ENCODE measurements at regions of chr6 and their contacts with region 1.

Region 1: DNA sequence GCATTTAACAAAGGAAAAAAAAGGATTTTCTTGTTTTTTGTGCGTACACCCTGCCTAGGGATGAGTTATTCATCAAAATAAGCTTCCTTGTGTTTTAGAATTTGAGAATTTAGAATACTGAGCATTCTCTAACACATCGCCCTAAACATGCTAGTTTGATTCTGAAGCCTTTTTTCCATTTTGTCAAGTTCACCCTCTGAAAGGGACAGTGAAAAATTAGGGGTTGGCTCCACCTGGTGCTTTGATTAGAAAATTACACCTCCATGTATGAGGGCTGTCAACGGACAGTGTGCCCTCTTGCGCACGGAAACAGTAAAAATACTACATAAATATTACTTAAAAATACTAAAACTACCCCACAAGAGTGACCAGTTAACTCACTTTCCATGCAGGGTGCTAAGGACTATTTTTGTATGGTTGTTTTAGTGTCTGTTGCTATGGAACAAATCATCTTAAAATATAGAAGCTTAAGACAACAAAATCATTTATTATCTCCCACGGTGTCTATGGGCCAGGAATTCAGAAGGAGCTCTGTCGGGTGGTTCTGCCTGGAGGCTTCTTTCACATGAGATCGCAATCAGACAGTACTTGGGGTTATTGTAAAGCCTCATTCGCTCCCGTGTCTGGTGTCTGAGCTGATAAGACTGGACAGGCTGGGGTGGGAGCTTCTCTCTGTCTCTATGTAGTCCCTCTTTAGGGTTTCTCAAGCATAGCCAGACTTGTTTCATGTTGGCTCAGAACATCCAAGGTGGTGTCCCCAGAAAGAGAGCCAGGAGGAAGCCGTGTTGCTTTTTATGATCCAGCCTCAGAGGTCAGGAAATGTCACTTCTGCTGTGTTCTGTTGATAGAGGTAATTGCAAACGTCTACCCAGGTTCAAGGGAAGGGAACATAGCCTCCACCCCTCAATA is 41.1 kb upstream of the TMEM170B start:
- DNase-seq: peak; percentile 84 to 88
- H3K4me3 ChIP-seq: no peak overlapping the region
- H3K4me1 ChIP-seq: peaks cover 14% of the 10 kb centered on the region
- H3K27me3 ChIP-seq: no peaks in the 10 kb centered on the region

Region 2: GRCh38 chr6:10954590-10955010 is 541.8 kb before region 1 on chr6:
- in situ Hi-C with region 1: loop called (anchors 10 kb)
- DNase-seq: peak; percentile 59 to 93
- H3K4me3 ChIP-seq: no peak overlapping the region
- H3K4me1 ChIP-seq: no peaks in the 10 kb centered on the region
- H3K27me3 ChIP-seq: no peaks in the 10 kb centered on the region

Region 3: DNA sequence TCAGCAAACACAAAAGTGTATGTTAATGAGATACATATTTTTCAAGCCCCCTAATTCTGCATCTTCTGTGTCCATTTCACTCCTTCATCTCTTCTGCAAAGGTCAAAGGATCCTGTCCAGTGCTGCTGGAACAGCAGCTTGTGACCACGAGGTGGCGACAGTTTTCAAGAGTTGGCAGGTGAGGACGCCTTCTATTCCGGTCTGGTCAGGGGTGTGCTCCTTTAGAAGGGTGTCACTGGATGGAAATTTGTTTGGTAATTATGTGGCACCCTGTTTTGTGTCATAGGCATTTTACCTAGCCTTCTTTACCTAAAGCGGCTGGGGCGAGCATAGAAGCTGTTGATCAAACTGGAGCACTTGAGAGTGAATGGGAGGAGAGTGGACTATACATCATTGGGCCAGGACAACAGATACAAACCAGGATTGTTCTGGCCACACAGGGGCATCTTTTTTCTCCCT is 352.0 kb before region 1 on chr6:
- in situ Hi-C with region 1: loop called (anchors 5 kb)
- DNase-seq: peak; percentile 69 to 90
- H3K4me3 ChIP-seq: no peak overlapping the region
- H3K4me1 ChIP-seq: peaks cover 11% of the 10 kb centered on the region
- H3K27me3 ChIP-seq: no peaks in the 10 kb centered on the region

Region 4: GRCh38 chr6:11232193-11232769 is 264.1 kb before region 1 on chr6 and contains the start of gene NEDD9:
- in situ Hi-C with region 1: loop called (anchors 10 kb)
- DNase-seq: peak; percentile 98 to 99
- H3K4me3 ChIP-seq: peak within 1 kb of the TSS; percentile 74
- H3K4me1 ChIP-seq: peaks cover 32% of the 10 kb centered on the region
- H3K27me3 ChIP-seq: no peaks in the 10 kb centered on the region

Region 5: DNA sequence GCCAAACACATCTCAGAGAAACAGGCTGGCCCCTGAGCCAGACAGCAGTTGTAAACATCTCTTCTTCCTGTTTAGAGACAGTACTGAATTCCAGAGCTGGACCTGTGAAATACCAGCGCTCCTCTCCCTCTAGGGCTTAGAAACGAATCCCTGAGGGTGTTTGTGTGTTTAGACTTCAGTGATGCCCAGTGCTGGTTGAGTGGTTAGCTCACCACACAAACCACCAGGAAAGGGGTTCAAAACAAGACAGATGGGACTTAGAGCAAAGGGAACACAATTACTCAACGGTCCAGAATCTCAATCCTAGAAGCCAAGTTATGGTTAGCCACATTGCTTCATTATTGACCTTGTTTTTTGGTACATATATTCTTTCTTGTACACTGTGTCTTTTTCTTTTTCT is 67.5 kb before region 1 on chr6:
- in situ Hi-C with region 1: no loop called
- DNase-seq: no peak
- H3K4me3 ChIP-seq: no peak overlapping the region
- H3K4me1 ChIP-seq: peaks cover 42% of the 10 kb centered on the region
- H3K27me3 ChIP-seq: no peaks in the 10 kb centered on the region

Region 6: GRCh38 chr6:11552442-11552841 is 56.0 kb after region 1 on chr6:
- in situ Hi-C with region 1: no loop called
- DNase-seq: no peak
- H3K4me3 ChIP-seq: no peak overlapping the region
- H3K4me1 ChIP-seq: no peaks in the 10 kb centered on the region
- H3K27me3 ChIP-seq: no peaks in the 10 kb centered on the region

Region 7: DNA sequence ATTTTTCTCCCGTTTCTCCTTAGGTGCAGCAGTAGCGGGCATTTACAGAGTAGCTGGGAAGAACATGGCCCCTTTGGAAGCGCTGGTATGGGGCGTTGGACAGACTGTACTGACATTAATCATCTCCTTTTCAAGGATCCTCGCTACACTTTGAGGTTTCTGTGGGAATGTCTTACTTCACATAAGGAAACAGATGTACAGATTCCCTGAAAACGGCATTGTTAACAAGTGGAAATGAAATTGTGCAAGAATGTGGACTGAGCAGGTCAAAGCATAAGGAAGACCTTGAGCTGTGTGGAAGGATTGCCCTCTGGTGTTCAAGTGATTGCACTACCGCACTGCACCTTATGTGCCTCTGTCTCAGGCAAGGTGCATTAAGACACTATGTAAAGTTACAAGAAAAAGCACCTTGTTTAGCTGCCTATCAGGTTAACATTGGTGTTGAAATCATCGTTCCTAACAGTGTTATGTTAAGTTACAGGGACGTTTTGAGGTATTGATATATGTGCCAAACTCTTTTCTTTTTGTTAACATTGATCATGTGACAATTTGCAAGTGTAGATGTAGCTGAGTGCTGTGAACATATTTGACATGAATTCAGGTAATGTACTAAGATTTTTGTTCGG is 79.1 kb after region 1 on chr6:
- in situ Hi-C with region 1: loop called (anchors 10 kb)
- DNase-seq: peak; percentile 73 to 79
- H3K4me3 ChIP-seq: no peak overlapping the region
- H3K4me1 ChIP-seq: no peaks in the 10 kb centered on the region
- H3K27me3 ChIP-seq: no peaks in the 10 kb centered on the region

Region 8: DNA sequence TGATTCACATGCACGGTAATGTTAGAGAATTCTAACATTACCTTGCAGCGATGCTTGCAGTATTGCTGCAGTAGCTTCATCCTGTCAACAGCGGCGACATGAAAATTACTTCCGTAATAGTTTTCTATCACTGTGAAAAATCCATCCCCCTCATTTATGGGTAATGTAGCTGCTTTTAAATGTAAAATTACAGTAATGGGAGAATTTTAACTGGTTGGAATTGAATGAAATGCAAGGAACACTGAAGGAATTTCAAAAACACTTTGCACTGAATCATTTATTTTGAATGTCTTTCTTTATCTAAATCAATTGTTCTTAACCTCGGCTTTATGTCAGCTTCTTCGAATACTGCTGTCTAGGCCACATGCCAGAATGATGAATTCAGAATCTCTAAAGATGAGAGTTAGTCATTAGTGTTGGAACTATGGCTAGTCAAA is 413.3 kb after region 1 on chr6:
- in situ Hi-C with region 1: no loop called
- DNase-seq: no peak
- H3K4me3 ChIP-seq: no peak overlapping the region
- H3K4me1 ChIP-seq: no peaks in the 10 kb centered on the region
- H3K27me3 ChIP-seq: no peaks in the 10 kb centered on the region

Measured in HAP-1 (cell line).